ENCODE measurements at regions of chr1 and their contacts with region 1.

Region 1: GRCh38 chr1:20361806-20362640 is 71.3 kb downstream of the VWA5B1 start:
- DNase-seq: peak; percentile 60 to 74
- H3K4me3 ChIP-seq: no peak overlapping the region
- H3K4me3 Mint-ChIP-seq: no peak overlapping the region
- H3K27ac Mint-ChIP-seq: no peak overlapping the region
- H3K4me1 ChIP-seq: no peaks in the 10 kb centered on the region
- H3K4me1 Mint-ChIP-seq: no peaks in the 10 kb centered on the region
- H3K27me3 ChIP-seq: no peaks in the 10 kb centered on the region; the same call in 1 of the 2 replicates
- H3K27me3 Mint-ChIP-seq: peaks cover 8% of the 10 kb centered on the region
- CTCF ChIP-seq: peak; percentile 63 to 79

Region 2: GRCh38 chr1:20212685-20213331 is 149.2 kb before region 1 on chr1:
- CTCF ChIA-PET with region 1: no interaction called
- POLR2A ChIA-PET with region 1: no interaction called
- intact Hi-C with region 1: loop called (anchors 10 kb)
- DNase-seq: peak; percentile 70 to 73
- H3K4me3 ChIP-seq: no peak overlapping the region
- H3K4me3 Mint-ChIP-seq: no peak overlapping the region
- H3K27ac Mint-ChIP-seq: no peak overlapping the region
- H3K4me1 ChIP-seq: no peaks in the 10 kb centered on the region
- H3K4me1 Mint-ChIP-seq: no peaks in the 10 kb centered on the region
- H3K27me3 ChIP-seq: no peaks in the 10 kb centered on the region; the same call in 1 of the 2 replicates
- H3K27me3 Mint-ChIP-seq: peaks cover 13% of the 10 kb centered on the region
- CTCF ChIP-seq: peak; percentile 52 to 74

Region 3: DNA sequence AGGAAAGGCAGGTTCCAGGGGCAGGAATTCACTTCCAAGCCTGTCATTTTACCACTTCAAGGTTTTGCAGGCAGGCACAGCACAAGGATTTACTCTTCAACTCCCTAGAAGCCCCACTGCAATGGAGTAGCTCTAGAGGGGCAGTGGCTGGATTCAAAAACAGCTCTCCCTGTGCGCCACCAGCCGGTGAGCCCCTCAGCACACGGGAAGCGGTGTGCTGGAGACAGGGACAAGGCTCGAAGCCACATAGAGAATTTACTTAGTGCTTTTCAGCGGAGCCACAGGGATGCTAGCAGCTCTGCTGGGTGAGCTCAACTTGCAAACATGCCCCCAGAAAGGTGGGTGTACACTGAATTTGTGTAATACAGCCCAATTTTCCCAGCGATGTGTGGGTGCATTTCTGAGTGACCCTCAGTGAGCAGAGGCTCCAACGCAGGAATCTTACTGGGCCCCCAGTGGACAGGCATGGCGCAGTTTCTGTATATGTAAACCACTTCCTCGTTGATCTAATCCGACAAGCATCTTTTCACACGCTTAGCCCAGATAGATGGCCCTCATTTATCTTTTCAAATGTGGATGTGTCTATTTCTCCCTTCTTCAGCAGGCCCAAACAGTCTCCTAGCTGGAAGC is 60.4 kb before region 1 on chr1:
- CTCF ChIA-PET with region 1: no interaction called
- POLR2A ChIA-PET with region 1: no interaction called
- intact Hi-C with region 1: no loop called
- DNase-seq: no peak
- H3K4me3 ChIP-seq: no peak overlapping the region
- H3K4me3 Mint-ChIP-seq: no peak overlapping the region
- H3K27ac Mint-ChIP-seq: no peak overlapping the region
- H3K4me1 ChIP-seq: no peaks in the 10 kb centered on the region
- H3K4me1 Mint-ChIP-seq: no peaks in the 10 kb centered on the region
- H3K27me3 ChIP-seq: no peaks in the 10 kb centered on the region
- H3K27me3 Mint-ChIP-seq: peaks cover 27% of the 10 kb centered on the region
- CTCF ChIP-seq: no peak

Region 4: GRCh38 chr1:20312818-20313217 is 49.2 kb before region 1 on chr1:
- CTCF ChIA-PET with region 1: no interaction called
- POLR2A ChIA-PET with region 1: no interaction called
- intact Hi-C with region 1: no loop called
- DNase-seq: no peak
- H3K4me3 ChIP-seq: no peak overlapping the region
- H3K4me3 Mint-ChIP-seq: no peak overlapping the region
- H3K27ac Mint-ChIP-seq: no peak overlapping the region
- H3K4me1 ChIP-seq: no peaks in the 10 kb centered on the region
- H3K4me1 Mint-ChIP-seq: no peaks in the 10 kb centered on the region
- H3K27me3 ChIP-seq: no peaks in the 10 kb centered on the region
- H3K27me3 Mint-ChIP-seq: peaks cover 17% of the 10 kb centered on the region
- CTCF ChIP-seq: no peak

Region 5: GRCh38 chr1:20329793-20330542 is 32.1 kb before region 1 on chr1:
- CTCF ChIA-PET with region 1: no interaction called
- POLR2A ChIA-PET with region 1: no interaction called
- intact Hi-C with region 1: no loop called
- DNase-seq: no peak
- H3K4me3 ChIP-seq: no peak overlapping the region
- H3K4me3 Mint-ChIP-seq: no peak overlapping the region
- H3K27ac Mint-ChIP-seq: no peak overlapping the region
- H3K4me1 ChIP-seq: no peaks in the 10 kb centered on the region
- H3K4me1 Mint-ChIP-seq: no peaks in the 10 kb centered on the region
- H3K27me3 ChIP-seq: no peaks in the 10 kb centered on the region; the same call in 1 of the 2 replicates
- H3K27me3 Mint-ChIP-seq: peaks cover 6% of the 10 kb centered on the region
- CTCF ChIP-seq: no peak